HEK293 (cell line): ENCODE measurements at regions of chr2 and their contacts with region 1.

Region 1: DNA sequence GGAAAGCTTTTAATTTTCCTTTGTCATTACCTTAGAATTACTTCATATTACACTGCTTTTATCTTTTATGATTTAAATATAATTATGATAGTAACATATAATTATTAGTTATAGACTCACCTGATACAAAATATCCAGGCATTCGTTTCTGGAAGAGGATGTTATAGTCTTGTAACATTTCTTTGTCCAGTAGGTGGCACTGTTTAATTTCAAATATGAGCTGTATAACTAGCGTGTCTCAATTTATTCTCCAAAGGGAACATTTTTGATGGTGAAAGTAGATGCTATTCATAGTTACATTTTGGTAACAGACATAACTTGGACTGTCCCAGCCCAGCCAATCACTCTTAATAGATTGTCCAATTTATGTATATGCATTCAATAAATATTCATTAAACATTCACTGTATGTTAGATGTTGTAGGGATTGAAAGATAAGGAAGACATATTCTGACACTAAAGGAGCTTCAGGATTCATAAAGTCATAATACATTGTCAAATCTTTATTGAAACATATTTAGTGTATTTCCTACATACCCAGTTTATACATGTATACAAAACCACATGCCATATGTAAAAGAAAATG is 19.2 kb downstream of the DAW1 start:
- H3K4me3 ChIP-seq: no peak overlapping the region
- H3K27ac ChIP-seq: no peak overlapping the region
- H3K4me1 ChIP-seq: no peaks in the 10 kb centered on the region
- CTCF ChIP-seq: no peak

Region 2: GRCh38 chr2:227450926-227451654 is 439.5 kb before region 1 on chr2:
- CTCF ChIA-PET with region 1: no interaction called
- POLR2A ChIA-PET with region 1: no interaction called
- H3K4me3 ChIP-seq: no peak overlapping the region
- H3K27ac ChIP-seq: no peak overlapping the region
- H3K4me1 ChIP-seq: no peaks in the 10 kb centered on the region
- CTCF ChIP-seq: no peak

Region 3: DNA sequence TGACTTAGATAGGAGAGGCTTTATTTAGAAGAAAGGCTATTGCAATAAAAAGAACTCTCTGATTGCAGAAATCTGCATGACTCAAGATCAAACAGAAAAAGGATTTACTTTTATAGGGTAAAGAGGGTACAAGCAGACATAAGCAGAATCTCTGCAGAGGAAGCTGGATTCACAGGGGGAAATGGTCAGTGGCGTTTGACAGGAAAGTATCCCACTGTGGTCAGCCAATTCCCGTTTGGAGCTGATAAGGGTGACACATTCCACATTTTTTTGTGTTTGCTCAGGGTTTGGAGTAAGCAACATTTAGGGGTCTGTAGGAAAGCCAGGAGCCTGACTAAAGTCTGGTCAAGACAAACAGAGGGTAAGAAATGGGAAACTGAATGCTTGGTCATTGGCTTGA is 247.9 kb before region 1 on chr2:
- CTCF ChIA-PET with region 1: no interaction called
- POLR2A ChIA-PET with region 1: no interaction called
- H3K4me3 ChIP-seq: no peak overlapping the region
- H3K27ac ChIP-seq: no peak overlapping the region
- H3K4me1 ChIP-seq: no peaks in the 10 kb centered on the region
- CTCF ChIP-seq: no peak

Region 4: DNA sequence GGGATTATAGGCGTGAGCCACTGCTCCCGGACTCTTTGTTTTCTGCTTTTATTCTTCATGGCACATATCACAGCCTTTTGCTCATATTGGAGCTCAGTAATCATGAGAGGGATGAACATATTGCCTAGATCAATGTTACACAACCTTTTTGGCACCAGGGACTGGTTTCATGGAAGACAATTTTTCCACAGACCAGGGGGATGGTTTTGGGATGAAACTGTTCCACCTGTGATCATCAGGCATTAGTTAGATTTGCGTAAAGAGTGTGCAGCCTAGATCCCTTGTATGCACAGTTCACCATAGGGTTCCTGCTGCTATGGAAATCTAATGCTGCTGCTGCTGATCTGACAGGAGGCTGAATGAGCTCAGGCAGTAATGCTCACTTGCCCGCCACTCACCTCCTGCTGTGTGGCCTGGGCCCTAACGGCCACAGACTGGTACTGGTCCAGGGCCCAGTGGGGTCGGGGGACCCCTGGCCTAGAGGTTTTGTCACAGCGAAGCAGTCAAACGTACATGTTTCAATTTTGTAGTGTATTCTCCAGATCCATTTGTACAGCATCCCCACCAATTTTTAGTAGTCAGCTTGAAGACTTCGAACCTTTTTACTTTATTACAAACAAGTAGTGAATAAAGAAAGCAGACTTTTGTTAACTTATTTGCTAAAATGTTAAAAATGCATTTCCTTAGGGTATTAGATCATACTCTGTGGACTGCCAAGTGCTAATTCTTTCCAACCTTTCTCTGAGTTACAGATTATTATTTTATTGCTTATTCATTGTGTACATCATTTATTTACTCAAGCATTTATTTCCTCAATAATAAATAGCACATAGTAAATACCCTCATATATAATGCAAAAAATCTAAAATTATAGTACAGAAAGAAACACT is 12.9 kb before region 1 on chr2:
- CTCF ChIA-PET with region 1: interaction called, 14 read pairs
- POLR2A ChIA-PET with region 1: no interaction called
- H3K4me3 ChIP-seq: no peak overlapping the region
- H3K27ac ChIP-seq: no peak overlapping the region
- H3K4me1 ChIP-seq: peaks cover 7% of the 10 kb centered on the region; the same call in 1 of the 2 replicates
- CTCF ChIP-seq: no peak

Region 5: DNA sequence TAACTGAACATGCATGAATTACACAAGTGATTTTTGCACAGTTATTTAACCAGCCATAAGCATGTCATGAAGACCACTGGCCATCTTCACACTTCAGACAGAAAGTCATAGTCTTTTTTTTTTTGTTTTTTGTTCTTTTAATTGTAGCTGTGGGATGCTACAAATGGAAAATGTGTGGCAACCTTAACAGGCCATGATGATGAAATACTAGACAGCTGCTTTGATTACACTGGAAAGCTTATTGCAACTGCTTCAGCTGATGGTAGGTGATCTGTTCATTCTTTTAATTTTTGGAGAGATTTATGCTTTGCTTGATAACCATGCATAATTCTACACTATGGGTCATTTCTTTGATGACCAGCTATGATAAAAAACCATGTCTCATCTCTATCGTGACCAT is 16.4 kb after region 1 on chr2:
- CTCF ChIA-PET with region 1: interaction called, 25 read pairs
- POLR2A ChIA-PET with region 1: no interaction called
- H3K4me3 ChIP-seq: no peak overlapping the region
- H3K27ac ChIP-seq: no peak overlapping the region
- H3K4me1 ChIP-seq: no peaks in the 10 kb centered on the region
- CTCF ChIP-seq: no peak